ENCODE measurements at regions of chr5 and their contacts with region 1.

Region 1: GRCh38 chr5:56909294-56910209 is at the start of gene SETD9:
- DNase-seq: peak; percentile 98
- H3K4me3 ChIP-seq: peak within 1 kb of the TSS; percentile 60
- H3K27ac ChIP-seq: peak within 1 kb of the TSS; percentile 89
- H3K4me1 ChIP-seq: no peaks in the 10 kb centered on the region
- H3K27me3 ChIP-seq: no peaks in the 10 kb centered on the region
- CTCF ChIP-seq: no peak
- total RNA-seq, gene SETD9: 10.0 and 11.9 TPM in 2 replicates

Region 2: GRCh38 chr5:56270568-56271392 is 638.8 kb before region 1 on chr5:
- CTCF ChIA-PET with region 1: no interaction called
- POLR2A ChIA-PET with region 1: no interaction called
- intact Hi-C with region 1: loop called (anchors 10 kb)
- DNase-seq: peak; percentile 82
- H3K4me3 ChIP-seq: no peak overlapping the region
- H3K27ac ChIP-seq: no peak overlapping the region
- H3K4me1 ChIP-seq: no peaks in the 10 kb centered on the region
- H3K27me3 ChIP-seq: no peaks in the 10 kb centered on the region
- CTCF ChIP-seq: peak; percentile 93

Region 3: GRCh38 chr5:56700711-56701110 is 208.8 kb before region 1 on chr5:
- CTCF ChIA-PET with region 1: no interaction called
- POLR2A ChIA-PET with region 1: no interaction called
- intact Hi-C with region 1: no loop called
- DNase-seq: no peak
- H3K4me3 ChIP-seq: no peak overlapping the region
- H3K27ac ChIP-seq: no peak overlapping the region
- H3K4me1 ChIP-seq: no peaks in the 10 kb centered on the region
- H3K27me3 ChIP-seq: peaks cover 38% of the 10 kb centered on the region
- CTCF ChIP-seq: no peak

Region 4: GRCh38 chr5:56814963-56815658 is 94.4 kb before region 1 on chr5 and contains the start of gene MAP3K1:
- CTCF ChIA-PET with region 1: no interaction called
- POLR2A ChIA-PET with region 1: no interaction called
- intact Hi-C with region 1: no loop called
- DNase-seq: peak; percentile 82
- H3K4me3 ChIP-seq: peak within 1 kb of the TSS; percentile 92
- H3K27ac ChIP-seq: peak within 1 kb of the TSS; percentile 85
- H3K4me1 ChIP-seq: peaks cover 15% of the 10 kb centered on the region
- H3K27me3 ChIP-seq: no peaks in the 10 kb centered on the region
- CTCF ChIP-seq: no peak
- total RNA-seq, gene MAP3K1: 6.3 and 7.2 TPM in 2 replicates

Region 5: DNA sequence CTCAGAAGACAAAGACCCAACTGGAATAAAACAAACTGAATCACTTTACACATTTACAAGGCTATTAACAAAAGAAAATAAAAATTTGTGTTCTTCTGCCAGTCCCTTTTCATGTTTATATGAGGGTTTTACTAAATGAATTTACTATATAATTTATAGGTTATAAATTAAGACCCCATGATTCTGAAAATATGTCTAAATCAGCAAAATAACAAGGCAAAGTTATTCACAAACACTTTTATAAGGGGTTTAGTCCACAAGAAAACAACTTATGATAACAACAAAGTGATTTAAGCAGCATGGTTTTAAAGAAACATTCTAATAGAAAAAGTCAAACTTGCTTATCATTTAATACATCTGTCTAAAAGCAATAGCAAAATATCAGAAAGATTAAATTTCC is 37.5 kb after region 1 on chr5:
- CTCF ChIA-PET with region 1: no interaction called
- POLR2A ChIA-PET with region 1: no interaction called
- intact Hi-C with region 1: loop called (anchors 5 kb)
- DNase-seq: no peak
- H3K4me3 ChIP-seq: no peak overlapping the region
- H3K27ac ChIP-seq: no peak overlapping the region
- H3K4me1 ChIP-seq: no peaks in the 10 kb centered on the region
- H3K27me3 ChIP-seq: no peaks in the 10 kb centered on the region
- CTCF ChIP-seq: no peak

Region 6: DNA sequence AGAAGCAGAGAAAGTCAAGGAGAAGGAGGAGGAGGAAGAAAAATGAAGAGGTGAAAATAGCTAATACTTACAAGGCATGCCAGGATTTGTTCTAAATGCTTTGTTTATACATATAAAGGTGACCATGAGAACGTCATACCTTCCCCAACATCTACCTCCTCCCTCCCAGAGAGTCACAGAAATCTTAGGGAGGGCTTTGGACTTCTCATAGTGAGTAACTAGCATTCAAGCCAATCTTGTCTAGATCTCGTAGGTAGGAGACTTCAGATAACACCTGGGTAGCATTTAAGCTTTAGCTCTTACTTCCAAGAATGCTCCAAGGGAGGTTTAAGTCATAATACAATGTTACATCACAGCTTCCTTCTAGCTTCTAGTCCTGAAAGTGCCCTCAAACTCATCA is 227.8 kb after region 1 on chr5:
- CTCF ChIA-PET with region 1: no interaction called
- POLR2A ChIA-PET with region 1: no interaction called
- intact Hi-C with region 1: loop called (anchors 2 kb)
- DNase-seq: no peak
- H3K4me3 ChIP-seq: no peak overlapping the region
- H3K27ac ChIP-seq: no peak overlapping the region
- H3K4me1 ChIP-seq: no peaks in the 10 kb centered on the region
- H3K27me3 ChIP-seq: no peaks in the 10 kb centered on the region
- CTCF ChIP-seq: no peak

Region 7: GRCh38 chr5:57173185-57174127 is 263.9 kb after region 1 on chr5 and contains the start of gene GPBP1:
- CTCF ChIA-PET with region 1: no interaction called
- POLR2A ChIA-PET with region 1: no interaction called
- intact Hi-C with region 1: loop called (anchors 2 kb)
- DNase-seq: peak; percentile 100
- H3K4me3 ChIP-seq: peak within 1 kb of the TSS; percentile 88
- H3K27ac ChIP-seq: peak within 1 kb of the TSS; percentile 99
- H3K4me1 ChIP-seq: peaks cover 2% of the 10 kb centered on the region
- H3K27me3 ChIP-seq: no peaks in the 10 kb centered on the region
- CTCF ChIP-seq: no peak
- total RNA-seq, gene GPBP1: 85.5 and 86.4 TPM in 2 replicates

Region 8: DNA sequence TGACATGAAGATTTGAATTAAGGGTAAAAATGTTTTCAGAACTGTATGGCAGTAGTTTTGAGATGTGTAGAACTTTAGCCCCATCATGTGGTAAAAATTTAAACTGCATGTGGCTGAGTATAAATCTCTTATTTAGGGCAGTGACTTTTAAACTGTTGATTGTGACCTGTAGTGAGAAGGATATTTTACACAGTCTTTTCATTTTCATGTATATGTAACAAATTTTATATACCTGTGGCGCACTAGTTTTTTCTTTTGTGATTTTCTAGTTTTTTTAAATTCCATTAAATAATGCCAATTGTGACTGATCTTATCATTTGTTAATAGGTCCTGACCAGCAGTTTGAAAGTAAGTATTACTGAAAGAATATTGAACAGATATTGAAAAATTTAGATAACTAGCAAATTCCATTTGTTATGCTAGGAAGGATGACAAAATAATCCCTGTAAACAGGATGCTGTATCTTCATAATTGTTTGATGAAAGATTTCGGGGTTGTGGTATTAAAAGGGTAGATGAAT is 311.6 kb after region 1 on chr5:
- CTCF ChIA-PET with region 1: no interaction called
- POLR2A ChIA-PET with region 1: no interaction called
- intact Hi-C with region 1: loop called (anchors 2 kb)
- DNase-seq: peak; percentile 68
- H3K4me3 ChIP-seq: no peak overlapping the region
- H3K27ac ChIP-seq: no peak overlapping the region
- H3K4me1 ChIP-seq: peaks cover 3% of the 10 kb centered on the region
- H3K27me3 ChIP-seq: no peaks in the 10 kb centered on the region
- CTCF ChIP-seq: peak; percentile 84

Region 9: DNA sequence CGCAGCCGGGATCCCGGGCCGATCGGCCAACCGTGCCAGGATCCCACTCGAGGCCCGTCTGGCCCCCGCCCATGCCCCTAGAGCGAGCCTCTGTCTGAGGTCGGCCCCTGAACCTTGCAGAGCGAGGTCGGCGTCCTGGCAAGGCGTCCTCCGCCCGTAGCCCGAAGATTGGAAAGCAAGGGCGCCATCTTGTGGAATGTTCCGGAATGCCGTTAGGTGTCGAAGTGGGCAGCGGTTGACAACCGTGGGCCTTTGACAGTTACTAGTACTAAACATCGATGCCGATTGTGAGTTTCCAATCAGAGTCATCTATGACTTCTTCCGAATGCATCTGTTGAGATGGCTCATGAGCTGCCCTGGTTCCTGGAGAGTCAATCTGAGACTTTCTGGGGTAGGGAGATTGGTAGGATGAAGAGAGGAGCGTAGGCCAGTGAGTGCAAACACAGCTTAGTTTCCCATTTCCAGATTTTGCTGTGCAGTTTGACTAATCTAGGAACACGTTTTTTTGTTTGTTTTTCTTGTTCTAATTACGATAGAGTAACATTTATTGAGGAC is 1551.3 kb after region 1 on chr5:
- CTCF ChIA-PET with region 1: no interaction called
- POLR2A ChIA-PET with region 1: no interaction called
- intact Hi-C with region 1: loop called (anchors 5 kb)
- DNase-seq: peak; percentile 86
- H3K4me3 ChIP-seq: peak overlapping the region; percentile 54
- H3K27ac ChIP-seq: peak overlapping the region; percentile 38
- H3K4me1 ChIP-seq: peaks cover 8% of the 10 kb centered on the region
- H3K27me3 ChIP-seq: peaks cover 24% of the 10 kb centered on the region
- CTCF ChIP-seq: peak; percentile 83

Measured in A673 (cell line).